ENCODE measurements at regions of chr5 and their contacts with region 1.

Region 1: DNA sequence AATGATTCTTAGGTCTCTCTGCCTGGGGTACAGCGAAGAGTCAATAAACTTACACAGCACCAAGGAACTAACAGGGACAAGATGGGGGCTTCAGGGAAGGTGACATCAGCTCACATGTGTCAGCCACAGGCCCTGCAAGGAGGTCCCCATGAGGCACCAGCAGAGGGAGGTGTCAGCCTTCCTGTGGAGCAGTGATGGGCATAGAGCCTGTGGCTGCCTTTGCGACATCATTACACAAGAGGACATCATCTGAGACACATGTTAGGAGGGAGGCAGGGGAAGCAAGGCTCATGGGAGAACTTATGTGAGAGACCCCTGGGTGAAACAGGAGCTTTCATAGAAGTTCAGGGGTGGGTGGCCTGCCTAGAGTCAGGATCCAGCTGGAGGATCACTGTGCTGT is 389.6 kb downstream of the SEMA5A start:
- DNase-seq: peak in 1 of 2 experiments; percentile 10
- H3K4me3 ChIP-seq: no peak overlapping the region
- H3K27ac ChIP-seq: no peak overlapping the region
- H3K4me1 ChIP-seq: no peaks in the 10 kb centered on the region
- H3K27me3 ChIP-seq: no peaks in the 10 kb centered on the region
- CTCF ChIP-seq: peak; percentile 54 to 67 (median 67)
- EP300 ChIP-seq: no peak
- POLR2A ChIP-seq: no peak
- RAD21 ChIP-seq: peak; percentile 72 to 75

Region 2: GRCh38 chr5:9166202-9167112 is 10.2 kb after region 1 on chr5:
- CTCF ChIA-PET with region 1: interaction called, 26 read pairs
- POLR2A ChIA-PET with region 1: no interaction called
- DNase-seq: no peak
- H3K4me3 ChIP-seq: no peak overlapping the region
- H3K27ac ChIP-seq: no peak overlapping the region
- H3K4me1 ChIP-seq: peaks cover 0 to 7% (median 1%) of the 10 kb centered on the region in 4 experiments; a peak in 2 of 7 replicates
- H3K27me3 ChIP-seq: no peaks in the 10 kb centered on the region
- CTCF ChIP-seq: no peak
- EP300 ChIP-seq: no peak
- POLR2A ChIP-seq: no peak
- RAD21 ChIP-seq: no peak

Measured in H1 (cell line).